Head of caudate nucleus (tissue), 42 donors: ENCODE measurements at regions of chr19 and their contacts with region 1.

Region 1: DNA sequence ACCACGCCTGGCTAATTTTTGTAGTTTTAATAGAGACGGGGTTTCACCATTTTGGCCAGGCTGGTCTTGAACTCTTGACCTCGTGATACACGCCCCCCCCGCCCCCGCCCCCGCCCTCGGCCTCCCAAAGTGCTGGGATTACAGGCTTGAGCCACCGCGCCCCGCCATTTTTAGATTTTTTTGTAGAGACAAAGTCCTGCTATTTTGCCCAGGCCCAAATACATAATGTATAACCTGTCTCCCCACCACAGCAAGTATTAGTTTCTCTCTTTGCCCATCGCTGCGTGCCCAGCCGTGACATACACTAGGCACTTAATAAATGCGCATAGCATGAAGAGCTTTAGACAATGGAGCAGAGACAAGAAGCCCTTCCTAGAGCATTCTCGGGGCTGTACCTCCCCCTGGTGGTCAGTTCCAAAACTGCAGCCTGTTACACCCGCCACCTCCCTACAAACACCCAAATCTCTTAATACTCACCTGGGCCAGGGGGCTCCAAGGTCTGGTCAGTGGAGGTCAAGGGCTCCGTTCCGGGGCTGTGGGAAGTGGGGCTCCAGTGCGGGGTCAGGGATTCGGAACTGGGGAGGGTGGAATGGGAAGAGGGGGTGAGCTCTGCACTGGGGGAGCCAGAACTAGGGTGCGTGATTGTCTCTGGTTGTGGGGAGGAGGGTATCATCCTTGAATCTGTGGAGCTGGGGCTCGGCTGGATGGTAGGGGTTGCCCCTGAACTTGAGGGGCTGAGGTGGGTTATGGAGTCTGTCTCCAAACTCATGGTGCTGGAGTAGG is 22.5 kb downstream of the IQCN start:
- DNase-seq: peak; percentile 26 to 92 (median 82)

Region 2: GRCh38 chr19:18194554-18195238 is 57.1 kb before region 1 on chr19:
- intact Hi-C with region 1: loop called (anchors 5 kb)
- DNase-seq: peak in 8 of 42 donors; percentile 13 to 46 (median 26)

Region 3: DNA sequence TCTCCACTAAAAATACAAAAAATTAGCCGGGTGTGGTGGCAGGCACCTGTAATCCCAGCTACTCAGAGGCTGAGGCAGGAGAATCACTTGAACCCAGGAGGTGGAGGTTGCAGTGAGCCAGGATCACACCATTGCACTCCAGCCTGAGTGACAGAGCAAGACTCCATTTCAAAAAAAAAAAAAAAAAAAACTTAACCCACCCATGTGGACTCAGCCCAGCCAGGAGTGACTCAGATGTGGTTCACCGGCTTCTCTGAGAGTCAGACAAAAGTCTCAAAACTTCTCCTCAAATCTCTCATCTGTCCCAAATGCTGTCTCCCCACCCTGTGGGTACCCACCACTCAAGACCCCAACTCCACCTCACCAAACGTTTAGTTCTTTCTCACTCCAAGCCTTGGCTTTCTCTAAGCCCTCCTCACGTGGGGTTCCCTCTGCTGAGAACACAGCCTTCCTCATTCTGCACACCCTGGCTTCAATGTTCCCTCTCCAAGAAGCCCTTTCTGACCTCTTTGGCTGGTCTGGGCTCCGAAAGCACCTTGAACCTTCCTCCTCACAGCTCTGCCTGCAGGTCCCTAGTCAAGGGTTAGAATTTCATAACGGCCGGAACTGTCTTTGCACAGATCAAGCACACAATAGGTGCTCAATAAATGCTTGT is 36.9 kb before region 1 on chr19:
- intact Hi-C with region 1: loop called (anchors 5 kb)
- DNase-seq: no peak